Thyroid gland (tissue), 4 donors: ENCODE measurements at regions of chr21 and their contacts with region 1.

Region 1: DNA sequence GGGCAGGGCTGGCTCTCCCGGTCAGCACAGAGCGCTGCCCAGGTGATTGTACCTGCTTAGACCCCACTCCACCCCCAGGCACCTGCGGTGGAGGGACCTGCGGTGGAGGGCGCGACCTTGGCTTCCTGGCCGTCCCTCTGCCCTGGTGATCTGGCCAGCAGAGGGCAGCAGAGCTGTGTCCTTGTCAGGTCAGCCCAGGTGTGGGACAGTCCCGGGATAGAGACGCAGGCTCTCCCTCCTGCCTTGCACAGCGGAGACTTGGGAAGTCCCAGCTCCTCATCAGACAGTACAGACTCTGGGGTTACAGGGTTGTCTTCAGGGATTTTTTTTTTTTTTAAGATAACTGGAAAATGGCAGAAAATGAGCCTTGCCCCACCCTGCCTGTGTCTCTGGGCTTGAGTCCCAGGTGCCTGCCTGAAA is 10.0 kb downstream of the SLX9 start:
- DNase-seq: peak; percentile 86 to 93
- H3K4me3 ChIP-seq: no peak overlapping the region
- H3K27ac ChIP-seq: no peak overlapping the region
- H3K4me1 ChIP-seq: peaks cover 0 to 6% of the 10 kb centered on the region in 2 donors
- H3K27me3 ChIP-seq: no peaks in the 10 kb centered on the region
- CTCF ChIP-seq: peak; percentile 73 to 96 (median 84)
- POLR2A ChIP-seq: no peak

Region 2: DNA sequence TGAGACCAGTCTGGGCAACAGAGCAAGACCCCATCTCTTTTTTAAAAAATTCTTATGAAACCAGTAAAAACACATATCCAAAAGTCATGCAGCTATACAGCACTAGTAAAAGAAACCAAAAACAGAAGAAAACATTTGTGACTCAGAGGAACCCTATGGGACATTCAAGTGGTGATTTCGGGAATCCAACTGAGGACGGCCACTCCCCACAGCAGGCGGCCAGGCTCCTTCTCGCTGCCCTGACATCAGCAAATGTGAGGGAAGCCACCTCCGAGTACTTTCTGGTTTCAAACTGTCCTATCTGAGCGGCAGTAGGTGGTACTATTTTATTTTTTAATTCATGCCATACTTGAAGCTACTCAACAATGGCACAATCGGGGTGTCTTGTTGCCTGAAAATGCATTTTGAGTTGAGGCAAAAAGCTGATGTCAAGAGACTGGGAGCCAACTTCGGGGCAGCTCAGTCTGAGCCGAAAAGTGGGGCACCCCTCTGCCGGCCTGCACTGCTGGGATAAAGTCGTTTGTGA is 135.2 kb before region 1 on chr21:
- intact Hi-C with region 1: no loop called
- DNase-seq: no peak
- H3K4me3 ChIP-seq: no peak overlapping the region
- H3K27ac ChIP-seq: peak overlapping the region in 1 of 3 donors; percentile 37
- H3K4me1 ChIP-seq: peaks cover 19 to 46% of the 10 kb centered on the region in 2 donors
- H3K27me3 ChIP-seq: no peaks in the 10 kb centered on the region
- CTCF ChIP-seq: no peak
- POLR2A ChIP-seq: no peak

Region 3: DNA sequence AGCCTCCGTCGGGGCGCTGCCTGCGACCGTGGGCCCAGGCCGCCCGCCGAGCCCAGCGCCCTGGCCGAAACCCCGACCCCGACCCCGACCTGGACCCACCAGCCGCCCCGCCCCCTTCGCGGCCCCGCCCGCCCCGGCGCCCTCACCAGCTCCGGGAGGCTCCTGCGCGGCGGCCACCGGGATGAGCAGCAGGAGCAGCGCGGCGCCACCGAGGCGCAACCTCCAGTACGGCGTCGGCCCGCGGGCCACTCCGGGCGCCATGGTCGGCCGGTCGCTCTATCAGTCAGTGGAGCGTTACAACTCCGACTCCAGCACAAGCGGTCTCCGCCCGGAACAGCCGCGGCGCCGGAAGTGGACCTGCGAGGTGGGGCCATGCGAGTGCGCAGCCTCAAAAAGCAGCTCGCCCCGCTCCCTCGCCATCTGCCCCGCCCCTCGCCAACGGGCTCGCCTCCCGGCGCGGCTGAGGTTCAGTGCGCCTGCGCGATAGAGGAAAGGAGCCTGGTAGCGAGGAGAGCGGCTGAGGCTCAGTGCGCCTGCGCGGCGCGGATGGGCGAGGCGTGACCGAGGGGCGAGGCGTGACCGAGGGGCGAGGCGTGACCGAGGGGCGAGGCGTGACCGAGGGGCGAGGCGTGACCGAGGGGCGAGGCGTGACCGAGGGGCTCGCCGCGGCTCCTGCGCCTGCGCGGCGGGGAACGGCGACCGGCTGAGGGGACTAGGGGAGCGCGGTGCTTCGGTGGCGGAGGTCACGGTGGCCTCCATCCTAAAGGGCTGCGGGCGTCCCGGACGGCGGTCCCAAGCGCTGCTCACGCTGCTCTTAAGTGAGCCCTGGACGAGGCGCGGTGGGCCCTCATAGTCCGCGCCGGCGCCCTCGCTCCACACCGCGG is 76.2 kb before region 1 on chr21 and contains the start of gene PTTG1IP:
- intact Hi-C with region 1: no loop called
- DNase-seq: peak; percentile 98 to 99
- H3K4me3 ChIP-seq: peak within 1 kb of the TSS; percentile 53 to 79 (median 78)
- H3K27ac ChIP-seq: peak within 1 kb of the TSS; percentile 95 to 97 (median 96)
- H3K4me1 ChIP-seq: peaks cover 48 to 51% of the 10 kb centered on the region in 2 donors
- H3K27me3 ChIP-seq: no peaks in the 10 kb centered on the region
- CTCF ChIP-seq: peak in 1 of 6 experiments; percentile 27
- POLR2A ChIP-seq: peak; percentile 69 to 88
- total RNA-seq, gene PTTG1IP: 256 to 374 (median 309) TPM

Region 4: DNA sequence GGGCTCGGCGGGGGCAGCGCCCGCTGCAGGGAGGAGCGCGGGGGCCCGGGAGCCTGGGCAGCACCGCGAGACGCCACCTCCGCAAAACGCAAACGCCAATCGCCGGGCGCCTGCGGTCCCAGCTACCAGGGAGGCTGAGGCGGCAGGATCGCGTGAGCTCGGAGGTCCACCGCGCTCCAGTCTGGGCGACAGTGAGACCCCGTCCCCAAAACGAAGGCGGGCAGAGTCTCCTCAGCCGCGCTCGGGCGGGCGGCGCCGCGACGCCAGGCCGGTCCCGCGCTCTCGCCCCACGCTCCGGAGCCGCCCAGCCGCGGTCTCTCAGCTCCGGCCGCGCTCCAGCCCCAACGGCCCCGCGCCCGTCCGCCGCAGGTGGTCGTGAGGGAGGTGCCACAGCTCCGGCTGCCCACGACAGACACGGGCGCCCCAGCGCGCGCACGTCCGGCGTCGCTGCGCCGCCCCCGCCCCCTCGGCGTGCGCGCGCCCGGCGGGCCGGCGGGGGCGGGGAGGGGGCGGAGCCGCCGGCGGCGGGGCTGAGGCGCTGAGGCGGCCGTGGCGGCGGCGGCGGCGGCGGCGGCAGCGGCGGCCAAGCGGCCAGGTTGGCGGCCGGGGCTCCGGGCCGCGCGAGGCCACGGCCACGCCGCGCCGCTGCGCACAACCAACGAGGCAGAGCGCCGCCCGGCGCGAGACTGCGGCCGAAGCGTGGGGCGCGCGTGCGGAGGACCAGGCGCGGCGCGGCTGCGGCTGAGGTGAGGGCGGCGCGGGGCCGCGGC is 124.4 kb after region 1 on chr21 and contains the start of gene ADARB1:
- intact Hi-C with region 1: loop called (anchors 10 kb)
- DNase-seq: peak; percentile 40 to 48
- H3K4me3 ChIP-seq: peak within 1 kb of the TSS; percentile 53 to 83 (median 73)
- H3K27ac ChIP-seq: peak within 1 kb of the TSS in 2 of 3 donors; percentile 62 to 77
- H3K4me1 ChIP-seq: peaks cover 9% of the 10 kb centered on the region in 2 donors
- H3K27me3 ChIP-seq: no peaks in the 10 kb centered on the region
- CTCF ChIP-seq: no peak
- POLR2A ChIP-seq: peak in 1 of 2 donors; percentile 77
- total RNA-seq, gene ADARB1: 5.0 to 20.2 (median 10.1) TPM

Region 5: DNA sequence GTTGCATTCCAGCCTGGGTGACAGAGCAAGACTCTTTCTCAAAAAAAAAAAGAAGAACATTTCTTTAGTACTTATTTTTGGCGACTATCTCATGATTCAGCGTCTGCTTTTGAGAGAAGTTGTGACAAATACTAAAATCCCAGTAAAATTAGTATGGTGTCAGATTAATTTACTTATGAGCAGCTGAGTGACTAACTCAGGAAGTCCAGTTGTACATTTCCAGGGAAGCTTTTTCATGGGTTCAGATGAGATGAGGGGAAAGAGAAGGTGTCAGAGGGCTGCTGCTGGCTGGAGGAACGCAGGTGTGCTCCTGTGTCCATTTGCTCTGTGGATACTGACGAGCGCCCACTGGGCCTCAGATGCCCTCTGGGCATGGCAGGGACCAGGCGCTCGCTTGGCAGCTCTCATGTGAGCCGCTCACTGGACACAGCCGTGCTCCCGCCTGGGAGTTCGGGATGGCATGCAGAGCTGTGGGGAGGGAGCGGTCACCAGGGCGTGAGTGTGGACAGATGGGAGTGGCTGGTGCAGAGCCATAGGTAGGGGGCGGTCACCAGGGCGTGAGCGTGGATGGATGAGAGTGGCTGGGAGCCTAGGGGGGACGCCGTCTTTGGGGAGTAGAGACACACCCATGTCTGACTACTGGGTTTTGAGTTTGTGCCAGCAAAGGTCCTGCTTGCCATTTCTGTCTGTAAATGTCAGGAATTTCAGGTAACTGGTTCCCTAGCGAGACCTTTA is 179.6 kb after region 1 on chr21:
- intact Hi-C with region 1: loop called (anchors 5 kb)
- DNase-seq: no peak
- H3K4me3 ChIP-seq: no peak overlapping the region
- H3K27ac ChIP-seq: peak overlapping the region in 2 of 3 donors; percentile 46 to 53
- H3K4me1 ChIP-seq: peaks cover 0 to 20% of the 10 kb centered on the region in 2 donors
- H3K27me3 ChIP-seq: no peaks in the 10 kb centered on the region
- CTCF ChIP-seq: no peak
- POLR2A ChIP-seq: no peak

Region 6: GRCh38 chr21:45136927-45137611 is 187.3 kb after region 1 on chr21:
- intact Hi-C with region 1: loop called (anchors 5 kb)
- DNase-seq: peak; percentile 84 to 87
- H3K4me3 ChIP-seq: no peak overlapping the region
- H3K27ac ChIP-seq: no peak overlapping the region
- H3K4me1 ChIP-seq: peaks cover 0 to 4% of the 10 kb centered on the region in 2 donors
- H3K27me3 ChIP-seq: no peaks in the 10 kb centered on the region
- CTCF ChIP-seq: peak; percentile 57 to 87 (median 68)
- POLR2A ChIP-seq: no peak